T-cell (primary cell): ENCODE measurements at regions of chr1 and their contacts with region 1.

Region 1: GRCh38 chr1:27070390-27071048 is 57.9 kb upstream of the TENT5B start:
- DNase-seq: no peak
- ATAC-seq: no peak
- H3K4me3 ChIP-seq: no peak overlapping the region
- H3K4me3 Mint-ChIP-seq: no peak overlapping the region
- H3K27ac ChIP-seq: no peak overlapping the region
- H3K27ac Mint-ChIP-seq: no peak overlapping the region
- H3K4me1 ChIP-seq: no peaks in the 10 kb centered on the region
- H3K4me1 Mint-ChIP-seq: no peaks in the 10 kb centered on the region
- H3K27me3 ChIP-seq: peaks cover 0 to 23% of the 10 kb centered on the region in 2 experiments
- H3K27me3 Mint-ChIP-seq: peaks cover 0 to 6% of the 10 kb centered on the region in 2 donors

Region 2: DNA sequence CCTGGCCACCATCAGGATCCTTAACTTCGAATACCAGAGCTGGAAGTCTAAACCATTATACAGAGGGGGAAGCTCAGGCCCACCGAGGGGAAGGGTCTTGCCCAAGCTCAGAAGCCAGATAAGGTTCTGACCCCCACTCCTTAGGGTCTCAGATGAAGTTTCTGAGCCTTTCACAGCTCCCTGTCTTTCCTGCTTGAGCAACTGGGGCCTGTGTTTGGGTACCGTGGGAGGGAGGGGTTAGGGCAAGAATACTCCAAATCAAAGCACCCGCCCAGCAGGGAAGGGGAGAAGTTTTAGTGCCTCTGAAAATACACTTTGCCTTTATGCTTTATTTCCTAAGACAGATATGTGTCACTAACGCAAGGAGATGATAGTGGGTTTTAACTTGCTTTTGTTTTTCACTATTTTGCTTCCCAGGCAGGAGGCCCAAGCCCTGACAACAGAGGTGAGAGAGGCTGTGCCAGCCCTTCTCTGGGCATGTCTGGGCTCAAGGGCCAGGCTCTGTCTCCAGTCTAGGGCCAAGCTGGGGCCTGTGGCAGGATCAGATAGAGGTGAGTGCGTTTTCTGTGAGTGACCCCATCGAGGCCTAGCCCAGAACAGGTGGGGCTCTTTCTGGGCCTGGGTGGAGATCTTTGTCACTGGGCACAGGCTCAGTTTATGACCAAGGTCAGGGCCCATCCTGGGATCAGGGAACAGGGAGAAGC is 37.3 kb before region 1 on chr1:
- CTCF ChIA-PET with region 1: no interaction called
- POLR2A ChIA-PET with region 1: no interaction called
- DNase-seq: no peak
- ATAC-seq: no peak
- H3K4me3 ChIP-seq: no peak overlapping the region
- H3K4me3 Mint-ChIP-seq: no peak overlapping the region
- H3K27ac ChIP-seq: no peak overlapping the region
- H3K27ac Mint-ChIP-seq: no peak overlapping the region
- H3K4me1 ChIP-seq: peaks cover 0 to 8% of the 10 kb centered on the region in 2 experiments
- H3K4me1 Mint-ChIP-seq: peaks cover 0 to 4% (median 2%) of the 10 kb centered on the region in 3 donors
- H3K27me3 ChIP-seq: peaks cover 0 to 40% of the 10 kb centered on the region in 2 experiments
- H3K27me3 Mint-ChIP-seq: peaks cover 2 to 3% of the 10 kb centered on the region in 2 donors

Region 3: GRCh38 chr1:27057389-27057788 is 13.1 kb before region 1 on chr1:
- CTCF ChIA-PET with region 1: interaction called in 1 of 2 experiments, 7 read pairs
- POLR2A ChIA-PET with region 1: interaction called in 1 of 2 experiments, 16 read pairs
- DNase-seq: no peak
- ATAC-seq: no peak
- H3K4me3 ChIP-seq: no peak overlapping the region
- H3K4me3 Mint-ChIP-seq: no peak overlapping the region
- H3K27ac ChIP-seq: no peak overlapping the region
- H3K27ac Mint-ChIP-seq: no peak overlapping the region
- H3K4me1 ChIP-seq: no peaks in the 10 kb centered on the region
- H3K4me1 Mint-ChIP-seq: no peaks in the 10 kb centered on the region
- H3K27me3 ChIP-seq: no peaks in the 10 kb centered on the region
- H3K27me3 Mint-ChIP-seq: no peaks in the 10 kb centered on the region

Region 4: DNA sequence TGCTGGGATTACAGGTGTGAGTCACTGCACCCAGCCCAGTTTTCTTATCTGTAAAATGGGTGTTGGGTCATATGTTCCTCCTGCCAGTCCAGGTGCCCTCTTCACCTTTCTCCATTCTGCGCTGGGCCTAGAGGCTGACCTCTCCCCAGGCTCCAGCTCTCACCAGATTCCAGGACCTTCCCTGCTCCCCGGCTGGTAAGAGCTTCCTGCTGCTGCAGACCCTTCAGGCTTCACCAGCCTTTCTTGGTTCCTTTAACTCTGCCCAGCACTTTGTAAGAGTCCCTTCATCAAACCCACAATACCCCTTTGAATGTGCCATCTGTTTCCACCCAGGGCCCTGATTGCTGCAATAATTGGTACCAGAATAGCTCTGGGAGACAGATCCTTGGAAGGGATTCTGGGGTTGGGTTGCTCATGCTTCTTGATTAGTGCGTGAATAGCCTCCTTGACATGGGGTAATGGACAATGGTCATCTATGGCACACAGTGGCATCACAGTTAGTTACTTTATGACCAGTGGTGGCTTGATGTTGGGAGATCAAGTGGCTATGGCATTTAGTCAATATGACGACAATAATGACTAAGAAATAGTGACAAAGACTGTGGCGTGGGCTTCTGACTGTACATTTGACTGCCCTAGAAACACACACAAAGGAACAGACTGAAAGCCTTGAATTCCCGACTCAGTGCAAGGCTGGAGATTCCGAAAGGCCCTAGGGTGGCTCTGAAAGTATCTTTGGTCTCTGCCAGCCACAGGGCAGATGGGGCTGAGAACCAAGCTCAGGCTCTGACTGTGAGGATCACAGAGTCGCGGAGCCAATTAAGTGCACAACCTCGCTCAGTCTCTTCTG is 17.1 kb after region 1 on chr1:
- CTCF ChIA-PET with region 1: no interaction called
- POLR2A ChIA-PET with region 1: no interaction called
- DNase-seq: no peak
- ATAC-seq: no peak
- H3K4me3 ChIP-seq: no peak overlapping the region
- H3K4me3 Mint-ChIP-seq: no peak overlapping the region
- H3K27ac ChIP-seq: no peak overlapping the region
- H3K27ac Mint-ChIP-seq: no peak overlapping the region
- H3K4me1 ChIP-seq: no peaks in the 10 kb centered on the region
- H3K4me1 Mint-ChIP-seq: peaks cover 2 to 12% (median 5%) of the 10 kb centered on the region in 3 donors
- H3K27me3 ChIP-seq: peaks cover 0 to 13% of the 10 kb centered on the region in 2 experiments
- H3K27me3 Mint-ChIP-seq: no peaks in the 10 kb centered on the region

Region 5: DNA sequence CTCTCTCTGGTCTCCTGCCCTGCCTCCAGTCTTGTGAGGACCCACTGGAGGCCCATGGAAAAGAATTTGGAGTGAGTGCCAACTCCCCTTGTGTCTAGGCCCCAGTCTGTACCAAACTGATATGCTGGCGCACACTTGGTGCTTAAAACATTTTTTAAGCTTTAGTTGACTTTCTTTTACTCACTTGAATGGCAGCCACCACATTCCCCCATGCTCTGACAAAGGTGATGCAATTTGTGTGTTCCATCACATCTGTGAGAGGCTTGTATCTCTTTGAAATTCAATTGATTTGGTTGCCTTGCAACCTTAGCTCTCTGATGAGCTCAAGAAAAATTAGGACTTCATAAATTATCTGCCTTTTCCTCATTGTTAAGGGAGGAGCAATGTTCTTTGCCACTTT is 133.4 kb after region 1 on chr1:
- CTCF ChIA-PET with region 1: no interaction called
- POLR2A ChIA-PET with region 1: no interaction called
- DNase-seq: no peak
- ATAC-seq: no peak
- H3K4me3 ChIP-seq: no peak overlapping the region
- H3K4me3 Mint-ChIP-seq: no peak overlapping the region
- H3K27ac ChIP-seq: no peak overlapping the region
- H3K27ac Mint-ChIP-seq: no peak overlapping the region
- H3K4me1 ChIP-seq: no peaks in the 10 kb centered on the region
- H3K4me1 Mint-ChIP-seq: no peaks in the 10 kb centered on the region
- H3K27me3 ChIP-seq: peaks cover 0 to 4% of the 10 kb centered on the region in 2 experiments
- H3K27me3 Mint-ChIP-seq: no peaks in the 10 kb centered on the region